Left ventricle myocardium inferior (tissue), 1 donor: ENCODE measurements at regions of chr4 and their contacts with region 1.

Region 1: GRCh38 chr4:85113706-85114105 is 147.2 kb upstream of the WDFY3 start:
- DNase-seq: no peak
- H3K4me3 ChIP-seq: no peak overlapping the region
- H3K27ac ChIP-seq: no peak overlapping the region
- H3K4me1 ChIP-seq: no peaks in the 10 kb centered on the region
- H3K27me3 ChIP-seq: no peaks in the 10 kb centered on the region
- CTCF ChIP-seq: no peak

Region 2: GRCh38 chr4:85092536-85092935 is 21.2 kb before region 1 on chr4:
- intact Hi-C with region 1: loop called (anchors 1 kb)
- DNase-seq: no peak
- H3K4me3 ChIP-seq: no peak overlapping the region
- H3K27ac ChIP-seq: no peak overlapping the region
- H3K4me1 ChIP-seq: no peaks in the 10 kb centered on the region
- H3K27me3 ChIP-seq: no peaks in the 10 kb centered on the region
- CTCF ChIP-seq: no peak